ENCODE measurements at regions of chr14 and their contacts with region 1.

Region 1: GRCh38 chr14:98711453-98711852 is 560.5 kb downstream of the BCL11B start:
- DNase-seq: no peak
- ATAC-seq: peak; percentile 51

Region 2: GRCh38 chr14:98670609-98671008 is 40.8 kb before region 1 on chr14:
- intact Hi-C with region 1: loop called (anchors 2 kb)
- DNase-seq: no peak
- ATAC-seq: no peak

Region 3: GRCh38 chr14:98766818-98767217 is 55.4 kb after region 1 on chr14:
- intact Hi-C with region 1: no loop called
- DNase-seq: no peak
- ATAC-seq: peak; percentile 93

Region 4: GRCh38 chr14:99749142-99749541 is 1037.7 kb after region 1 on chr14:
- intact Hi-C with region 1: no loop called
- DNase-seq: no peak
- ATAC-seq: no peak

Region 5: DNA sequence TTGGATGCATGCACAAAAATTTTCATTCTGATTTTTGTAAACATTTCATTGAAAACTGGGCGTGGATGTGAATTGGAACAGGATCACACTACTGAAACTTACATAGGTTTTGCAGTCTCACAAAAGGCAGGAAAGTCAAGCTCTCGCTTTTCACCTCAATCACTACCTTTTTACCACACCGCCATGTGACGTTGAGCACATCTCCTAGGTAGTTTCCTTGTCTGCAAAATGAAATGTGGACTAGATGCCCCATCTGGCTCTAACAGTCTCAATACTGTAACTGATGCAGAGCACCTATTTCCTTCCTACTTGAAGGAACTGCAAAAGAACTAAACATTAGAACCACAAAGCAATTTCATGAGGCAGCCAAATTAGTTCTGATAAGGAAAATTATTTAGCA is 1523.1 kb after region 1 on chr14:
- intact Hi-C with region 1: no loop called
- DNase-seq: no peak
- ATAC-seq: no peak